ENCODE measurements at regions of chr17 and their contacts with region 1.

Region 1: DNA sequence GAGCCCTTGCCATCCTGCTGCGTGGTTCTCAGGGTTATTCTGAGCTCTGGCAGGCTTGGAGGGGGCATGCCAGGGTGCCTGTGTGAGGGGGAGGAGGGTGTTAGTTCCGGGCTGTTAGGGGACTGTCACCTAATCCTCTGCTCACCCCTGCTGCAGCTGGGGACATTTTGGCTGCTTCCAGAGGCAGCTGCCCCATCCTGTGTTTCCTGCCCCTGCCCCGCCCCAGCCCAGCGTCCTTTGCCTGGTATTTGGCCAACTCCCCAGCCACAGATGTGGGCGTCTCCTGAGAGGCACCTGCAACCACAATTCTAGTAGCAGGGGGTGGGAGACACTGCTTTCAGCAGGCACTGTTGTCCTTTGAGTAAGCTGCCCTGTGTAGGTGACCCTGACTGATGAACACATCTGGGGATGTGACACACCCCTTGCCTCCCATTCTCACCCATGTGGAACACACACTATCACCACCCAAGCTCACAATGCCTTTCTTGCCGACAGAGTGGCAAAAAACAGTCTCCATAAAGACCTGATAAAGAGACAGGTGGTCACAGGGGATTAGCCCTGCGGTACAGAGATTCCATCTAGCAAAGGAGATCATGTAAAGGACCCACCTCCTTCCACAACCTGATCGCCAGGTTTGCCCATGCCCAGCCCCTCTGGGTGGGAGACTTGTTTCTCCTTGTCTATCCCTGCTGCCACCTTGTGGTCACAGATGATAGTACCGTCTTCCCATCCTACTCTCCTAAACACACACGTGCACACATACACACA is at the start of gene CHRNE:
- DNase-seq: peak; percentile 88 to 94
- H3K4me3 ChIP-seq: no peak within 1 kb of the TSS
- H3K27ac ChIP-seq: peak within 1 kb of the TSS in 4 of 5 donors; percentile 24 to 71 (median 46)
- H3K4me1 ChIP-seq: peaks cover 20 to 52% (median 44%) of the 10 kb centered on the region in 4 donors
- H3K27me3 ChIP-seq: peaks cover 0 to 42% (median 0%) of the 10 kb centered on the region in 3 donors
- CTCF ChIP-seq: peak in 5 of 7 experiments; percentile 61 to 80 (median 73)
- EP300 ChIP-seq: no peak
- POLR2A ChIP-seq: no peak
- total RNA-seq, gene CHRNE: 0.45 to 2.0 TPM in 2 of 5 donors, not detected in the others

Region 2: GRCh38 chr17:4739122-4740024 is 163.9 kb before region 1 on chr17 and contains the starts of genes CXCL16 and ZMYND15:
- intact Hi-C with region 1: loop called (anchors 10 kb)
- DNase-seq: peak; percentile 82 to 92
- H3K4me3 ChIP-seq: peak within 1 kb of the TSS; percentile 66 to 76 (median 72)
- H3K27ac ChIP-seq: peak within 1 kb of the TSS; percentile 77 to 86 (median 85)
- H3K4me1 ChIP-seq: peaks cover 11 to 43% (median 15%) of the 10 kb centered on the region in 4 donors
- H3K27me3 ChIP-seq: peaks cover 0 to 19% (median 0%) of the 10 kb centered on the region in 3 donors
- CTCF ChIP-seq: no peak
- EP300 ChIP-seq: no peak
- POLR2A ChIP-seq: no peak
- total RNA-seq, gene CXCL16: 17.4 to 47.4 (median 30.9) TPM
- total RNA-seq, gene ZMYND15: 0.43 to 3.1 (median 1.5) TPM in 3 of 5 donors, not detected in the others

Region 3: DNA sequence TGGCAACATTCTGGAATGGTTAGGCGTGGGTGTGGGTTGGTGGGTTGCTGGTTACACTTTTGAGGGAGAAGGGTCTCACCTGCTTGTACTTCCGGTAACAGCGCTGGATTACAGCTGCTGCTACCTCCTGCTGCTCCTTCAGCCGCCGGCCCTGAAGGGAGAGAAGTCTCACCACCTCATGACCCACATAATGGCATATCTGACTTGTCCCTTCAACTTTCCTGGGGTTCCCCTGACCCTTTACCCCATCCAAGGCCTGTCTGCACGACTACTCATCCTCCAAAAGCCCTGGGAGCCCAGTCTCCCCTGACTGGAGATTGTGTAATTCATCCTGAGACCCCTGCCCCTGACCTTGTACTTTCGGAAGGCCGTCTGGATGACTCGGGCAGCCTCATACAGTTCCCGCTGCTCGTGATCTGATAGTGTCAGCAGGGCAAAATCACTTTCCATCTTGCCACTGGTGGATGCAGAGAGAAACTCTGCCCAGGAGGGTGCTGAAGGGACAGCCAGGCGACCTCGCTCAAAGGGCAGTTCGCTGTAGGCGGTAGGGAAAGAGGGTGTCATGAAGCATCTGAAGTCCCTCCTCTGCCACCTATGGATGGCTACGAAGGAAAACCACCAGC is 66.4 kb after region 1 on chr17:
- intact Hi-C with region 1: loop called (anchors 10 kb)
- DNase-seq: no peak
- H3K4me3 ChIP-seq: peak overlapping the region in 1 of 4 donors; percentile 64
- H3K27ac ChIP-seq: peak overlapping the region; percentile 3 to 97 (median 93)
- H3K4me1 ChIP-seq: peaks cover 28 to 65% (median 39%) of the 10 kb centered on the region in 4 donors
- H3K27me3 ChIP-seq: no peaks in the 10 kb centered on the region
- CTCF ChIP-seq: no peak
- EP300 ChIP-seq: no peak
- POLR2A ChIP-seq: no peak